T-cell (primary cell): ENCODE measurements at regions of chr5 and their contacts with region 1.

Region 1: DNA sequence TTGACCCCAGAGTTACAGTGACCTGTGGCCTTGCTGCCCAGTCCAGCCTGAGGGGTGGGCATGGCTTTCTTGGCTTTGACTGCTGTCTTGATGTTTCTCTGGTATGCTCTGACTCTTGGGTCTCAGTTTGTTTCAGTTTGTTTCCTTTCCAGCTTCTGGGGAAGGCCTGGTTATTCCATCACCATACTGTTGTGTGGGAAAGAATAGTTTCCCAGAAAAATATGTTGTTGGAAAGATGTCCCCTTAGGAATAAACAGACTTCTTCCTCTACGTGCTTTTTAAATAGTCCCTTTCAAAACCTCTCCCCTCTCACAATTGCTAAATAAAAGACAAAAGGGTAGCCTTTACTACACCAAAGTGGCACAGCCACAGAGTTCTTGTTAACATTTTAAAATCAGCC is 49.5 kb downstream of the EGFLAM start:
- DNase-seq: no peak
- ATAC-seq: no peak
- H3K4me3 ChIP-seq: no peak overlapping the region
- H3K4me3 Mint-ChIP-seq: no peak overlapping the region
- H3K27ac ChIP-seq: no peak overlapping the region
- H3K27ac Mint-ChIP-seq: no peak overlapping the region
- H3K4me1 ChIP-seq: no peaks in the 10 kb centered on the region
- H3K4me1 Mint-ChIP-seq: no peaks in the 10 kb centered on the region
- H3K27me3 ChIP-seq: peaks cover 0 to 2% of the 10 kb centered on the region in 2 experiments
- H3K27me3 Mint-ChIP-seq: no peaks in the 10 kb centered on the region

Region 2: GRCh38 chr5:38265546-38266179 is 42.2 kb before region 1 on chr5:
- CTCF ChIA-PET with region 1: interaction called in 1 of 2 experiments, 10 read pairs
- POLR2A ChIA-PET with region 1: no interaction called
- DNase-seq: peak in 21 of 35 experiments; percentile 4 to 52 (median 20)
- ATAC-seq: peak in 1 of 4 experiments; percentile 56
- H3K4me3 ChIP-seq: no peak overlapping the region
- H3K4me3 Mint-ChIP-seq: no peak overlapping the region
- H3K27ac ChIP-seq: no peak overlapping the region
- H3K27ac Mint-ChIP-seq: no peak overlapping the region
- H3K4me1 ChIP-seq: no peaks in the 10 kb centered on the region
- H3K4me1 Mint-ChIP-seq: no peaks in the 10 kb centered on the region
- H3K27me3 ChIP-seq: peaks cover 9 to 16% of the 10 kb centered on the region in 2 experiments
- H3K27me3 Mint-ChIP-seq: peaks cover 48 to 54% of the 10 kb centered on the region in 2 donors

Region 3: DNA sequence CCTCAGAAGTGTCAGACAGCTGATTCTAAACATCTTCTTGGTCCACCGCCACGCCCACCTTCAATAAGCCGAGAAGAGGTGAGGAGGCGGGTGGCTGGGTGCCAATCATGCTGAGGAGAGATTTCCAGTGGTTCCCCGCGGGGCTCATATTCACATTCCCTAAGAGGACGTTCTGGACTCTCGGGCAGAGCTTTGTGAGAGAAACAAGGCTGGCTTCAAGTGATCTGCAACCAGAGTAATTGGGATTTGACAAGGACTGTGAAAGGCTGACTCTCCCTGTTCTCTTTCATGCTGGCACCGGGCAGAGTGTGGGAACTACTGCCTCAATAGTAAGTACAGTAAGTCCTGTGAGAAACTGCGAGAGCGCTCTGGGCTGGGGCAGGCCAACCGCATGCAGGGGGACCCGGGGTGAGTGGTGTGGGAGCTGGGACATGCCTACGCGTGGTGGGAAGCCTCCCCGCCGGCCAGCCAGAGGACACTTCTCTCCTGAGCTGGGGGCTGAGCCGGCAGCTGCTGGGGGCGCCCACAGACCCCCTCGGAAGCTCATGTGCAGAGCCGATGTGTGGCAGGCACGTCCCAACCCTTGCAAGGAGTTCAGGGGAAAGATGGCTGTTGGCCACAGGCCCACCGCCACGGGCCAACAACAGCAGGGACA is 137.7 kb after region 1 on chr5:
- CTCF ChIA-PET with region 1: no interaction called
- POLR2A ChIA-PET with region 1: no interaction called
- DNase-seq: no peak
- ATAC-seq: no peak
- H3K4me3 ChIP-seq: no peak overlapping the region
- H3K4me3 Mint-ChIP-seq: no peak overlapping the region
- H3K27ac ChIP-seq: no peak overlapping the region
- H3K27ac Mint-ChIP-seq: no peak overlapping the region
- H3K4me1 ChIP-seq: no peaks in the 10 kb centered on the region
- H3K4me1 Mint-ChIP-seq: peaks cover 1 to 5% (median 2%) of the 10 kb centered on the region in 3 donors
- H3K27me3 ChIP-seq: peaks cover 5 to 49% of the 10 kb centered on the region in 2 experiments
- H3K27me3 Mint-ChIP-seq: peaks cover 41 to 59% of the 10 kb centered on the region in 2 donors